RWPE1 (cell line): ENCODE measurements at regions of chr1 and their contacts with region 1.

Region 1: DNA sequence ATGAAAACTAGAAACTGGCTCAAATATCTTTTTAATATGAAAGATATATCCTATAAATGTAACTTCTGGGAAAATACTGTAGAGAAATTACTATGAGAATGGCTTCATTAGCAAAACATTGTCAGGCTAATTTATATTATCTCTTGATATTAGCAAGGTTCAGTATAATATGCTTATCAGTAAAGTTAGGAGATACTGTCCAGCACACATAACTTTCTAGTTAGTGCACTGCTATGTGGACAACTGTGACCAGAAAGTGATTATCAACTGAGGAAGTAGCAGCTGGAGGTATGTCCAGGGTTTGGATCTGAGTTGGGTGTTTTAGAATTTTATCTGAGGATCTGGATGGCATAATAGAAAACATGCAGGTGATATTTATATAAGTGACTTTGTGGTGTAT is 7.5 kb downstream of the LRRC8C start:
- DNase-seq: no peak
- H3K27ac ChIP-seq: no peak overlapping the region
- CTCF ChIP-seq: no peak

Region 2: GRCh38 chr1:89261926-89262515 is 378.4 kb before region 1 on chr1:
- CTCF ChIA-PET with region 1: no interaction called
- POLR2A ChIA-PET with region 1: no interaction called
- DNase-seq: no peak
- H3K27ac ChIP-seq: no peak overlapping the region
- CTCF ChIP-seq: no peak

Region 3: GRCh38 chr1:89657886-89658285 is 17.4 kb after region 1 on chr1:
- CTCF ChIA-PET with region 1: no interaction called
- POLR2A ChIA-PET with region 1: interaction called, 11 read pairs
- DNase-seq: no peak
- H3K27ac ChIP-seq: no peak overlapping the region
- CTCF ChIP-seq: no peak

Region 4: DNA sequence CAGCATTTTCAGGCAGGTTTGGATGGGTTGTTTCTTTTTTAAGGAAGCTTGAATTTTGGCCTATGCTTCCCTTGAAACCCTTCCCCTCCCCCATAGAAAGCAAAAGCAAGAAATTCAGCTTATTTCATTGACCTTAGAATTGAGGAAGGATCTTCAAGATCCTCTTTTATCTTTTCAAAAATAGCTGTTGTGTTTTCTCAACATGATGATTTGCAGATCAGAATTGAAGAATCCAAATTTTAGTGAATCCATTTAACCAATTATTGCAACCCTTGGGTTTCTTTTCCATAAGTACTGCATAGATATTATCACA is 66.2 kb after region 1 on chr1:
- CTCF ChIA-PET with region 1: no interaction called
- POLR2A ChIA-PET with region 1: no interaction called
- DNase-seq: no peak
- H3K27ac ChIP-seq: no peak overlapping the region
- CTCF ChIP-seq: no peak